Esophagus muscularis mucosa (tissue), 4 donors: ENCODE measurements at regions of chr14 and their contacts with region 1.

Region 1: GRCh38 chr14:24114536-24115450 is at the starts of genes DCAF11 and NRL:
- DNase-seq: peak; percentile 100
- H3K4me3 ChIP-seq: peak within 1 kb of the TSS; percentile 63 to 96 (median 67)
- H3K27ac ChIP-seq: peak within 1 kb of the TSS; percentile 93 to 98 (median 97)
- H3K4me1 ChIP-seq: peaks cover 20 to 23% (median 22%) of the 10 kb centered on the region in 4 donors
- H3K27me3 ChIP-seq: no peaks in the 10 kb centered on the region
- CTCF ChIP-seq: peak in 1 of 3 experiments; percentile 9
- EP300 ChIP-seq: peak; percentile 75
- POLR2A ChIP-seq: peak; percentile 29
- total RNA-seq, gene DCAF11: 56.0 to 74.9 (median 66.8) TPM
- total RNA-seq, gene NRL: 1.8 to 3.3 (median 3.0) TPM

Region 2: DNA sequence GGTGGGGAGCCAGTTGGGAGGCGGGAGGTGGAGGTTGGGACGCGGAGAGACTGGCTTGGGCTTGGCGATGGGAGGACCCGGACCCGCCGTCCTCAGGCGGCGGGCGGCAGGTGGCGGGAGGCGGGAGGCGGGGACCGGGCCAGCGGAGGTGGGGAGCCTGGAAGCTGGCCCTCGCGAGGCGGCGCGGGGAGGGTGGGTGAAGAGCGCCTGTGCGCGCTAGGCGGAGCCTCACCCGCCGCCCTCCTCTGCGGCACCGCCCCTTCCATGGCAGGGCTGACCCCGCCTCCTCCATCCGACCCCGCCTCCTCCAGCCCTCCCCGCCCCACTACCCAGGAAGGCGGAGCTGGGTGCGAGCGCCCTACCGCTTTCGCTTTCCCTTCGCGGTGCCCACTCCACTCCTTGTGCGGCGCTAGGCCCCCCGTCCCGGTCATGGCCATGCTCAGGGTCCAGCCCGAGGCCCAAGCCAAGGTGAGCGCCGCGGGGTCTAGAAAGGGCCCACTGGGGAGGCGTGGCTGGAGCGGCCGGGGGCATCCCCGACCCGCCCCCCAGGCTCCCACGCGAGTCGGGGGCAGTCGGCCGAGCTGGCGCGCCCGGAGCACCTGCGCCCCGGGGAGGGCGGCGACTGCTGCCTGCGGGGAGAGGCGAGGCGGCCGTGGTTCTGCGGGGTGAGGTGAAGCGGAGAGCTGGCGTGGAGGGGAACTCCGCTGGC is 21.2 kb after region 1 on chr14 and contains the start of gene PSME1:
- intact Hi-C with region 1: loop called (anchors 1 kb)
- DNase-seq: peak; percentile 97
- H3K4me3 ChIP-seq: peak within 1 kb of the TSS; percentile 75 to 99 (median 94)
- H3K27ac ChIP-seq: peak within 1 kb of the TSS; percentile 89 to 96 (median 92)
- H3K4me1 ChIP-seq: peaks cover 53 to 64% (median 61%) of the 10 kb centered on the region in 4 donors
- H3K27me3 ChIP-seq: no peaks in the 10 kb centered on the region
- CTCF ChIP-seq: peak in 2 of 3 experiments; percentile 2 to 26
- EP300 ChIP-seq: no peak
- POLR2A ChIP-seq: no peak
- total RNA-seq, gene PSME1: 129 to 158 (median 143) TPM